ENCODE measurements at regions of chr17 and their contacts with region 1.

Region 1: DNA sequence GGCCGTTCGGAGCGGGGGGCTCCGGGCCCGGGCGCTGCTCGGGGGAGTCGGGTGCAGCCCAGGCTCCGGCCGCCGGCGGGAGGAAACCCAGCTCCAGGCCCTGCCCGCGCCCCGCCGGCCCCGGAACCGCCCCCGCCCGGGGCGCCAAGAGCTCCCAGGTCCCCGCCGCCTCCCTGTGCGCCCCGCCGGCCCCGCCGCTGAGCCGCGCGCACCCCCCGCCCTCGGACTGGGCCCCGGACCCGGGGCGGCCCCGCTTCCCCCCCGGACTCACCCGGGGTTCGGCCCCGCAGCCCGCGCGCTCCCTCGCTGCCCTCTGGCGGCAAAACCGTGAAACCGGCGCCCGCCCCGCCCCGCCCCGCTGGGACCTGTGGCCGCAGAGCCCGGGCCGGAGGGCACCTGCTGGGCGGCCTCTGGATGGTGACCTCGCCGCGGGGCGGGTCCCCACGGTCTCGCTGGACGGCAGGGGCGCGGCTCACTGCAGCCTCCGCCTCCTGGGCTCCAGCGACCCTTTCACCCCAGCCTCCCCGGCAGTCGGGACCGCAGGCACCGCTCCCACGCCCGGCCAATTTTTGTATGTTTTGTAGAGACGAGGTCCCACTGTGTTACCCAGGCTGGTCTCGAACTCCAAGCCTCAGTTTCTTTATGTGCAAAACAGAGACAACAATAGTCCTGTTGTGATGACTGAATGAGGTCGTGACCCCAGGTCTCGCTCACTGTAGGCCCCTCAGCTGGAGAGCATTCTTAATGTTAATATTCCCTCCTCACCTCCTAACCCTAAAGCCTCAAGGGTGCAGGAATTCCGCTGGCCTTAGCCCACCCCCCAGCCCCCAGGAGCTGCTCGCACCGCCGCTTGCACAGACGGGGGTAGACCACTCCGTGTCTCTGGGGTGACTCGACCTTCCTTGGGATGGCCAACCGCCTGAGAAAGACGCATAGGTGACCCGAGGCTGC is 33.6 kb upstream of the RPH3AL start:
- DNase-seq: peak; percentile 90
- H3K4me3 Mint-ChIP-seq: peak overlapping the region; percentile 81
- H3K27ac Mint-ChIP-seq: no peak overlapping the region
- H3K4me1 Mint-ChIP-seq: peaks cover 13% of the 10 kb centered on the region
- H3K27me3 Mint-ChIP-seq: peaks cover 35% of the 10 kb centered on the region

Region 2: DNA sequence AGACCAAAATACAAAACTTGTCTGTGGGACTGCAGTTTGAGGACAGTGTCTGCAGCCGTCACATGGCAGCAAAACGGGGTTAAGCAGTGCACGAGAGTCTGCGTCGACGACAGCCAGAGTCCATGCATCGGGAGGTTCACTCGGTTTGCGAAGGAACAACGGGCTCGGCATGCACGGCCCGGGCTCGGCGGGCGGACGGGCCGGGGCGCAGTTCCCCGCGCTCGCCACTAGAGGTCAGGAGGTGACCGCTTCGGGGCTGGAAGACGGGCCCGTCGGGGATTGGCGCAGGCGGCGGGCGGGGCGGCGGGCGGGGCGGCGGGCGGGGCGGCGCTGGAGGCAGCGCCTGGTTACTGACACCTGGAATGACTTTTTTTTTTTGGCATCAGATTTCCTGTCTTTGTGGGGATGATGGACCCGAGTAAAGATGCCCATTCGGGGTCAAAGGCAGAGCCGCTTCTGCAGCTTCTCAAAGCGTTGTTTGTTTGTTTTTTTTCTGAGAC is 242.4 kb before region 1 on chr17:
- intact Hi-C with region 1: loop called (anchors 2 kb)
- DNase-seq: peak; percentile 97
- H3K4me3 Mint-ChIP-seq: no peak overlapping the region
- H3K27ac Mint-ChIP-seq: no peak overlapping the region
- H3K4me1 Mint-ChIP-seq: peaks cover 5% of the 10 kb centered on the region
- H3K27me3 Mint-ChIP-seq: peaks cover 7% of the 10 kb centered on the region

Measured in activated CD4-positive, alpha-beta T cell treated with anti-CD3 and anti-CD28 coated beads, Interleukin-2, amount 10 ng/mL, durations not matched to agents 24 days and 14 days (primary cell).